B cell (primary cell): ENCODE measurements at regions of chr3 and their contacts with region 1.

Region 1: DNA sequence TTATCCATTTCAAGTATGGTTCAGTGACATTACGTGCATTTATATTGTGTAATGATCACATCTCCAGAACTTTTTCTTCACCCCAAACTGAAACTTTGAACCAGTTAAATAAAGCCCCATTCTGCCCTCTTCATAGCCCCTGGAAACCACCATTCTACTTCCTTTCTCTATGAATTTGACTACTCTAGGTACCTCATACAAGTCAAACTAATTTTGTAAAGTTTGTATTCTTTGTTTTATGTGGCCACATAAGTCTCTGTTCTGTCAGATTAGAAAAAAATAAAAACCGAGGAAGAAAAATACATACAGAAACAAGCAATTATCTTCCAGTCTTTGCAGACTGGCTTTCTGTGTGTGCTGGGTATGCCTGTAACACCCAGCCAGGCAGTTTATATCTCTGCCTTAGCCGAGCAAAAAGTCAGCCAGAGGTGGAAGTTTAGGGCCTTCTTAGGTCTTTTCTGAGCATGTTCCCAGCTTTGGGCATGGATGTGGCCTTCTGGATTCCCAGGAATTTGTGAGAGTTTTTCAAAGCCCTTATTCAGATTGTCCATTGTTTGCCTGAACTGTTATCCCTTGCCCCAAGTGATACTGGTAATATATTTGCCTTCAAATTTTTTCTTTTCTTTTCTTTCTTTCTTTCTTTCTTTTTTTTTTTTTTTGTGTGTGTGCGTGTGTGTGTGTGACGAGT is 6.0 kb upstream of the GRAMD1C start:
- DNase-seq: peak; percentile 23
- ATAC-seq: no peak
- H3K4me3 ChIP-seq: peak overlapping the region in 1 of 5 experiments; percentile 3
- H3K4me3 Mint-ChIP-seq: peak overlapping the region; percentile 20
- H3K27ac ChIP-seq: peak overlapping the region; percentile 43 to 59
- H3K27ac Mint-ChIP-seq: peak overlapping the region; percentile 56
- H3K4me1 ChIP-seq: peaks cover 49 to 50% of the 10 kb centered on the region in 2 donors
- H3K4me1 Mint-ChIP-seq: peaks cover 61% of the 10 kb centered on the region
- H3K27me3 ChIP-seq: no peaks in the 10 kb centered on the region
- H3K27me3 Mint-ChIP-seq: no peaks in the 10 kb centered on the region
- CTCF ChIP-seq: no peak

Region 2: GRCh38 chr3:113783463-113783862 is 49.2 kb before region 1 on chr3:
- CTCF ChIA-PET with region 1: interaction called, 3 read pairs
- POLR2A ChIA-PET with region 1: no interaction called
- intact Hi-C with region 1: loop called (anchors 2 kb)
- DNase-seq: peak; percentile 45
- ATAC-seq: peak; percentile 33
- H3K4me3 ChIP-seq: no peak overlapping the region
- H3K4me3 Mint-ChIP-seq: no peak overlapping the region
- H3K27ac ChIP-seq: peak overlapping the region in 1 of 2 donors; percentile 25
- H3K27ac Mint-ChIP-seq: peak overlapping the region; percentile 56
- H3K4me1 ChIP-seq: peaks cover 4 to 9% of the 10 kb centered on the region in 2 donors
- H3K4me1 Mint-ChIP-seq: peaks cover 11% of the 10 kb centered on the region
- H3K27me3 ChIP-seq: no peaks in the 10 kb centered on the region
- H3K27me3 Mint-ChIP-seq: no peaks in the 10 kb centered on the region
- CTCF ChIP-seq: no peak

Region 3: GRCh38 chr3:113802795-113803455 is 29.7 kb before region 1 on chr3:
- CTCF ChIA-PET with region 1: interaction called, 5 read pairs
- POLR2A ChIA-PET with region 1: interaction called, 4 read pairs
- intact Hi-C with region 1: loop called (anchors 2 kb)
- DNase-seq: peak; percentile 8
- ATAC-seq: peak; percentile 36
- H3K4me3 ChIP-seq: no peak overlapping the region
- H3K4me3 Mint-ChIP-seq: no peak overlapping the region
- H3K27ac ChIP-seq: no peak overlapping the region
- H3K27ac Mint-ChIP-seq: peak overlapping the region; percentile 50
- H3K4me1 ChIP-seq: peaks cover 3 to 7% of the 10 kb centered on the region in 2 donors
- H3K4me1 Mint-ChIP-seq: peaks cover 22% of the 10 kb centered on the region
- H3K27me3 ChIP-seq: no peaks in the 10 kb centered on the region
- H3K27me3 Mint-ChIP-seq: no peaks in the 10 kb centered on the region
- CTCF ChIP-seq: no peak

Region 4: DNA sequence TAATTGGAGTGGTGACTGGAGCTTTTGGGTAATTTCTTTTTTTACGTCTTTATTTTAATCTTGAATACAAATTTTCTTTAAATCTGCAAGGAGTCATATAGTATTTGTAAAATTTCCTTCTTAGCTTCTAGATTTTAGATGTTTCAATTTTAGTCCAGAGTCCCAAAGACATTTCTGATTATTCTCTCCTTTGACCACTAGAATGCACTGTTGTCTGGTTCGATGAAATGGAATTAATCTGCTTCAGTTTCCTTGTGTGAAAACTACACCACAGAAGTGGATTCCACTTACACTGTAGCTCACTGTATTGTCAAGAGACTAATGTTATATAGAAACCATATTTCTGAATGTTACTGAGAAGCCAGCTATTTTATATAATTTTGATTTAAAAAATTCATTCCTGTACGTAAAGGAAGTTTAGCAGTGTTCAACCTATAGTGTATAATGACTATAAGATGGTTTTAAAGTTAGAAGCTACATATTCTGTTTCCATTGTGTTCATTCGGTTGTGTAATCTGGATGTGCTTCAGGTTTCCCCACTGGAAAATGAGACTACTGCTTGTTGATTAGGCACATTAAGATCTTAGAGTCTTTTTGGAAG is 12.1 kb after region 1 on chr3:
- CTCF ChIA-PET with region 1: interaction called, 11 read pairs
- POLR2A ChIA-PET with region 1: no interaction called
- intact Hi-C with region 1: no loop called
- DNase-seq: peak; percentile 53
- ATAC-seq: peak; percentile 36
- H3K4me3 ChIP-seq: no peak overlapping the region
- H3K4me3 Mint-ChIP-seq: no peak overlapping the region
- H3K27ac ChIP-seq: no peak overlapping the region
- H3K27ac Mint-ChIP-seq: no peak overlapping the region
- H3K4me1 ChIP-seq: peaks cover 0 to under 1% of the 10 kb centered on the region in 2 donors
- H3K4me1 Mint-ChIP-seq: peaks cover 12% of the 10 kb centered on the region
- H3K27me3 ChIP-seq: no peaks in the 10 kb centered on the region
- H3K27me3 Mint-ChIP-seq: no peaks in the 10 kb centered on the region
- CTCF ChIP-seq: peak; percentile 75

Region 5: GRCh38 chr3:113873814-113874526 is 41.3 kb after region 1 on chr3:
- CTCF ChIA-PET with region 1: no interaction called
- POLR2A ChIA-PET with region 1: no interaction called
- intact Hi-C with region 1: no loop called
- DNase-seq: no peak
- ATAC-seq: no peak
- H3K4me3 ChIP-seq: no peak overlapping the region
- H3K4me3 Mint-ChIP-seq: no peak overlapping the region
- H3K27ac ChIP-seq: no peak overlapping the region
- H3K27ac Mint-ChIP-seq: no peak overlapping the region
- H3K4me1 ChIP-seq: no peaks in the 10 kb centered on the region
- H3K4me1 Mint-ChIP-seq: no peaks in the 10 kb centered on the region
- H3K27me3 ChIP-seq: no peaks in the 10 kb centered on the region
- H3K27me3 Mint-ChIP-seq: no peaks in the 10 kb centered on the region
- CTCF ChIP-seq: no peak